ENCODE measurements at regions of chr14 and their contacts with region 1.

Region 1: DNA sequence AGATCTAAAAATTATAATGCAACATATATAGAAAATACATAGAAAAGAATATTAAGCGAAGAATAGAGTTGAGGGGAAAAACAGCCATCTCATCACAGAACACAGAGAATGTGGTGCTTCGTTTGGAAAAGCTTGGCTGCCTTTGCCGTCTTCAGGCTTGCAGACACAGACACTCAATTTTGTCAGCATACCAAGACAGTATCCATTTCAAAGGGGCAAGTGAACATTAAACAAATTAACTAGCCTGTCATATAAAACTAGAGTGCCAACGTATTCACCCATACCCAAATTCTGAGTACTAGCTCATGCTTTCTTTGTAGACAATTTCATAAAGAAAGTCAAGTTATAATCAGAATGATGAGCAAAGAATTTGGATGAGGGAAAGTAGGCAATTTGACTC is 40.5 kb downstream of the DMAC2L start:
- DNase-seq: no peak
- H3K4me3 ChIP-seq: no peak overlapping the region
- H3K27ac ChIP-seq: no peak overlapping the region
- H3K4me1 ChIP-seq: no peaks in the 10 kb centered on the region
- CTCF ChIP-seq: no peak

Region 2: DNA sequence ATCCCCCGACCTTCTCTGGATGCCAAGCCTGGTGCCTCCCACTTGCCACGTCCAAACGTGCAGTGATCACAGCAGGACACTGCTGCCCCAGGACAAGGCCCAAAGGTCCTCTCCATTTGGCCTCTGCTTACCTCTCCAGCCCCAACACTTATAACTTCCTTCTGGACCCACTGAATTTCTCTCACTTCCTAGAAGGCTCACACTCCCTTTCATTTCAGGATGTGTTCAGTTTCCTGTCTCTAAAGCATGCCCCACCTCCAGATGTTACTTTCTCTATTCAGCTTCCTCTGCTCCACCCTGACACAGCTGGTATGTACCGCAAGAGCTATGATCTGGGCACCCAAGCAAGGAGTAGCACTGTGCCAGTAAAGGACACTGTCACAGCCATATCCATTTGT is 11.1 kb after region 1 on chr14:
- CTCF ChIA-PET with region 1: no interaction called
- POLR2A ChIA-PET with region 1: interaction called, 3 read pairs
- intact Hi-C with region 1: loop called (anchors 1 kb)
- DNase-seq: peak; percentile 83
- H3K4me3 ChIP-seq: peak overlapping the region; percentile 35
- H3K27ac ChIP-seq: no peak overlapping the region
- H3K4me1 ChIP-seq: peaks cover 12% of the 10 kb centered on the region
- CTCF ChIP-seq: no peak

Measured in OCI-LY7 (cell line).